ENCODE measurements at regions of chr11 and their contacts with region 1.

Region 1: GRCh38 chr11:72831513-72832300 is 17.5 kb downstream of the ATG16L2 start:
- DNase-seq: peak; percentile 75
- ATAC-seq: peak; percentile 64
- H3K4me3 Mint-ChIP-seq: no peak overlapping the region
- H3K27ac Mint-ChIP-seq: peak overlapping the region; percentile 2
- H3K4me1 Mint-ChIP-seq: peaks cover 20% of the 10 kb centered on the region
- H3K27me3 Mint-ChIP-seq: no peaks in the 10 kb centered on the region

Region 2: GRCh38 chr11:72848846-72849466 is 17.2 kb after region 1 on chr11:
- CTCF ChIA-PET with region 1: interaction called, 10 read pairs
- POLR2A ChIA-PET with region 1: no interaction called
- intact Hi-C with region 1: no loop called
- DNase-seq: peak; percentile 62
- ATAC-seq: peak; percentile 71
- H3K4me3 Mint-ChIP-seq: no peak overlapping the region
- H3K27ac Mint-ChIP-seq: no peak overlapping the region
- H3K4me1 Mint-ChIP-seq: peaks cover 3% of the 10 kb centered on the region
- H3K27me3 Mint-ChIP-seq: no peaks in the 10 kb centered on the region

Region 3: DNA sequence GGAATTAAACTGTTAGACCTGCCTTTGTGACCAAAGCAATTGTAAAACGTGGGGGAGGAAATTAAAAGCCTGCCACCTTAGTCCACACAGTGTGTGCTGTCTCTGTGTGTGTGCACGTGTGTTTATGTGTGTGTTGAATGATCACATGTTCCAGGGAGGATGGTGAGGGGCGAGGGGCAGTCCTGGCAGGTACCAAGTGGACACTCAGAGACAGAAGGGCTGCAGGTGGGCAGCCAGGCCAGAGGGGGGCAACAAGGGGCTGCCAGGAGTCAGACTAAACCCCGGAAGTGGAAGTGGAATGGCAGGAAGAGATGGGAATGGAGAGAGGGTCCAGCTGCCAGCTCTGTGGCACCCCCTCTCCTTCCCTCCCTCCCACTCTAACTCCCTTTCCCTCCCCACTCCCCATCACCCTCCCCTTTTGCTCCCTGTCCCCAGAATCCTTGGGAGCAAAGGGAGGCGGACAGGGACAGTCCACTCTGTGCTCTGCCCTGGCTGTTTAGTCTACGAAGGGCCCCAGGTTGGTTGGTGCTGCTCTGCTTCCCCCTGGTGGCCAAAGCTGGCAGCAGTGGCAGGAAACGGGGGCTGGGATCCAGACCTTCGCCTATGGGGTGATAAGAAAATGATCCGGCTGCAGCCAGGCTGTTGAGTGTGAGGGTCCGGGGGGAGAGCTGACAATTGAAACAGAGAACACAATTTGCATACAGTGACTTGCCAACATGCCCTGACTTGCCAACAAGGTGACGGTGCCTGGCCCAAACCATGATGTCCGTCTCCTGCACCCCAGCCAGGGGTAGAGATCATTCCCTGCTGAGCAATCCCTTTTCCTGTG is 410.8 kb after region 1 on chr11:
- CTCF ChIA-PET with region 1: interaction called, 3 read pairs
- POLR2A ChIA-PET with region 1: no interaction called
- intact Hi-C with region 1: loop called in 1 of 2 experiments (anchors 1 kb)
- DNase-seq: peak; percentile 87
- ATAC-seq: peak; percentile 93
- H3K4me3 Mint-ChIP-seq: no peak overlapping the region
- H3K27ac Mint-ChIP-seq: no peak overlapping the region
- H3K4me1 Mint-ChIP-seq: peaks cover 2% of the 10 kb centered on the region
- H3K27me3 Mint-ChIP-seq: no peaks in the 10 kb centered on the region

Measured in activated CD4-positive, alpha-beta T cell treated with anti-CD3 and anti-CD28 coated beads for 36 hours (primary cell).